WTC11 (cell line): ENCODE measurements at regions of chr6 and their contacts with region 1.

Region 1: DNA sequence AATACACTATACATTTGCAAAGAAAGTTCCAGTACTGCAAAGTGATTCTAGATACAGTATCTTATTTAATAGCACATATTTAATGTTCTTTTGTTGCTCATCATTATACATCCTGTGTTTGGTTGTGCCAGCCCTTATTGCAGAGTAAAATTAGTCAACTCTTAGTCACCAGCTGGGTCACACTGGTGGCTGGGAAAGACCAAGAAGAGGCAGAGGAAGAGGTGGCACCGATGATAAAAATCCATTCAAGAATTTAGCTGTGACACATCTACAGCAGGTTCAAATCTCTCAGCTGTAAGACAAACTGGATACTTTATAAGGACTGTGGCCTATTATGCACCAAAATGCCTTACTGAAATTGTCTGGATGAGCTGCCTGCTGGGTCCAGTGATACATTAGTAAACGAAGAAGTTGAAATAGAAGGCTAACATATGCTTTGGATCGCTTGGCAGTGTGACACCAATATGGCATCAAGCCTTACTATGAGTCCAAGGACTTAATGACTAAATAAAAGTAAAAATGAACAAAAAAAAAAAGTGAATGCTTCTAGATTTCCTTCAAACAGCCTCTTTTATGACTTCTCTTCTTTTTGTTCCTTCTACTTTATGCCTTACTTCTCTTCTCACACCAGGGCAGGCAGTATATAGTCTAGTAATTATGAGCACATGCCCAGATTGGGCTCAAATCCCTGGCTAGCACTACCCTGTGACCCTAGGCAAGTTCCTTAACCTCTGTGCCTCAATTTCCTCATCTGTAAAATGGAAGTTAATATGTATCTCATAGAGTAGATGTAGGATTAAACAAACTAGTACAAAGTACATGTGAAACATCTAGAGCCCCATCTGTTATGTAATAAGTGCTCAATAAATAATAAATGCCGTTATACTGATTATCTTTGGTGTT is 29.4 kb upstream of the RNF8 start:
- DNase-seq: no peak
- ATAC-seq: no peak
- H3K4me3 Mint-ChIP-seq: no peak overlapping the region
- H3K27ac Mint-ChIP-seq: no peak overlapping the region
- H3K4me1 Mint-ChIP-seq: peaks cover 2% of the 10 kb centered on the region; the same call in 1 of the 2 replicates
- H3K27me3 Mint-ChIP-seq: no peaks in the 10 kb centered on the region
- CTCF ChIP-seq: no peak

Region 2: GRCh38 chr6:37110500-37111461 is 213.6 kb before region 1 on chr6:
- CTCF ChIA-PET with region 1: no interaction called
- POLR2A ChIA-PET with region 1: no interaction called
- DNase-seq: no peak
- ATAC-seq: no peak
- H3K4me3 Mint-ChIP-seq: no peak overlapping the region
- H3K27ac Mint-ChIP-seq: peak overlapping the region; percentile 83
- H3K4me1 Mint-ChIP-seq: peaks cover 31% of the 10 kb centered on the region
- H3K27me3 Mint-ChIP-seq: no peaks in the 10 kb centered on the region
- CTCF ChIP-seq: no peak

Region 3: DNA sequence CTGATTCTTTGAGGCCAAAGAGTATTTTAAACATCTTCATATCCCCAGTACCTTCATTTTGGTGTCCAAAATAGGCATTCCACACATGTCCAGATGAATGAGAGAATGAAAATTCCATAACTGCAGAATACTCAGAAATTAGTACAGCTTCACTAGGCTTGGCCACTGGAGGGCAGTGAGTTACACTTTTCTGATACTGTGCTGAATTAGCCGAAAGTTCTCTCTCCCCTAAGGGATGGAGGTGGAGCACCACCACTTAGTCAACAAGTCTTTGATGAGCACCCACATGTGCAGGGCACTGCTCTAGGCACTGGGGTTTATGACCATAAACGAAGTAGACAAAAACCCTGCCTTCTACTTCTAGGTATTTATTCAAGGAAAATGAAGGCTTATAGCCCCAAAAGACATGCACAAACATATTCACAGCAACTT is 20.4 kb before region 1 on chr6:
- CTCF ChIA-PET with region 1: interaction called, 11 read pairs
- POLR2A ChIA-PET with region 1: no interaction called
- DNase-seq: no peak
- ATAC-seq: peak; percentile 69
- H3K4me3 Mint-ChIP-seq: no peak overlapping the region
- H3K27ac Mint-ChIP-seq: no peak overlapping the region
- H3K4me1 Mint-ChIP-seq: no peaks in the 10 kb centered on the region
- H3K27me3 Mint-ChIP-seq: no peaks in the 10 kb centered on the region
- CTCF ChIP-seq: no peak

Region 4: GRCh38 chr6:37353761-37354525 is 29.6 kb after region 1 on chr6 and contains the start of gene RNF8:
- CTCF ChIA-PET with region 1: interaction called, 11 read pairs
- POLR2A ChIA-PET with region 1: interaction called, 3 read pairs
- DNase-seq: peak; percentile 98
- ATAC-seq: peak; percentile 96
- H3K4me3 Mint-ChIP-seq: peak within 1 kb of the TSS; percentile 80
- H3K27ac Mint-ChIP-seq: peak within 1 kb of the TSS; percentile 78
- H3K4me1 Mint-ChIP-seq: peaks cover 34% of the 10 kb centered on the region
- H3K27me3 Mint-ChIP-seq: peaks cover 19% of the 10 kb centered on the region
- CTCF ChIP-seq: no peak
- total RNA-seq, gene RNF8: 33.1 to 35.9 TPM (median 33.3 TPM) in 3 replicates

Region 5: GRCh38 chr6:37365762-37366161 is 41.4 kb after region 1 on chr6:
- CTCF ChIA-PET with region 1: interaction called, 12 read pairs
- POLR2A ChIA-PET with region 1: no interaction called
- DNase-seq: no peak
- ATAC-seq: no peak
- H3K4me3 Mint-ChIP-seq: no peak overlapping the region
- H3K27ac Mint-ChIP-seq: no peak overlapping the region
- H3K4me1 Mint-ChIP-seq: no peaks in the 10 kb centered on the region
- H3K27me3 Mint-ChIP-seq: no peaks in the 10 kb centered on the region
- CTCF ChIP-seq: no peak

Region 6: GRCh38 chr6:37381579-37381978 is 57.2 kb after region 1 on chr6:
- CTCF ChIA-PET with region 1: interaction called, 10 read pairs
- POLR2A ChIA-PET with region 1: no interaction called
- DNase-seq: peak; percentile 51
- ATAC-seq: peak; percentile 87
- H3K4me3 Mint-ChIP-seq: no peak overlapping the region
- H3K27ac Mint-ChIP-seq: no peak overlapping the region
- H3K4me1 Mint-ChIP-seq: no peaks in the 10 kb centered on the region
- H3K27me3 Mint-ChIP-seq: no peaks in the 10 kb centered on the region
- CTCF ChIP-seq: peak; percentile 52